ENCODE measurements at regions of chrX and their contacts with region 1.

Region 1: GRCh38 chrX:41875142-41875541 is 48.2 kb downstream of the CASK start:
- DNase-seq: no peak
- ATAC-seq: no peak
- H3K4me3 ChIP-seq: no peak overlapping the region
- H3K4me3 Mint-ChIP-seq: no peak overlapping the region
- H3K27ac ChIP-seq: no peak overlapping the region
- H3K27ac Mint-ChIP-seq: peak overlapping the region; percentile 71
- H3K4me1 ChIP-seq: peaks cover 6% of the 10 kb centered on the region
- H3K4me1 Mint-ChIP-seq: peaks cover 58% of the 10 kb centered on the region
- H3K27me3 ChIP-seq: no peaks in the 10 kb centered on the region
- H3K27me3 Mint-ChIP-seq: no peaks in the 10 kb centered on the region
- CTCF ChIP-seq: no peak

Region 2: GRCh38 chrX:41837270-41837944 is 37.7 kb before region 1 on chrX:
- CTCF ChIA-PET with region 1: no interaction called
- POLR2A ChIA-PET with region 1: no interaction called
- intact Hi-C with region 1: loop called in 1 of 2 experiments (anchors 5 kb)
- DNase-seq: peak in 1 of 9 experiments; percentile 1
- ATAC-seq: no peak
- H3K4me3 ChIP-seq: no peak overlapping the region
- H3K4me3 Mint-ChIP-seq: no peak overlapping the region
- H3K27ac ChIP-seq: no peak overlapping the region
- H3K27ac Mint-ChIP-seq: peak overlapping the region; percentile 28
- H3K4me1 ChIP-seq: no peaks in the 10 kb centered on the region
- H3K4me1 Mint-ChIP-seq: peaks cover 19% of the 10 kb centered on the region
- H3K27me3 ChIP-seq: no peaks in the 10 kb centered on the region
- H3K27me3 Mint-ChIP-seq: no peaks in the 10 kb centered on the region
- CTCF ChIP-seq: no peak

Measured in CD8-positive, alpha-beta T cell (primary cell).